CD8-positive, alpha-beta T cell (primary cell): ENCODE measurements at regions of chr19 and their contacts with region 1.

Region 1: DNA sequence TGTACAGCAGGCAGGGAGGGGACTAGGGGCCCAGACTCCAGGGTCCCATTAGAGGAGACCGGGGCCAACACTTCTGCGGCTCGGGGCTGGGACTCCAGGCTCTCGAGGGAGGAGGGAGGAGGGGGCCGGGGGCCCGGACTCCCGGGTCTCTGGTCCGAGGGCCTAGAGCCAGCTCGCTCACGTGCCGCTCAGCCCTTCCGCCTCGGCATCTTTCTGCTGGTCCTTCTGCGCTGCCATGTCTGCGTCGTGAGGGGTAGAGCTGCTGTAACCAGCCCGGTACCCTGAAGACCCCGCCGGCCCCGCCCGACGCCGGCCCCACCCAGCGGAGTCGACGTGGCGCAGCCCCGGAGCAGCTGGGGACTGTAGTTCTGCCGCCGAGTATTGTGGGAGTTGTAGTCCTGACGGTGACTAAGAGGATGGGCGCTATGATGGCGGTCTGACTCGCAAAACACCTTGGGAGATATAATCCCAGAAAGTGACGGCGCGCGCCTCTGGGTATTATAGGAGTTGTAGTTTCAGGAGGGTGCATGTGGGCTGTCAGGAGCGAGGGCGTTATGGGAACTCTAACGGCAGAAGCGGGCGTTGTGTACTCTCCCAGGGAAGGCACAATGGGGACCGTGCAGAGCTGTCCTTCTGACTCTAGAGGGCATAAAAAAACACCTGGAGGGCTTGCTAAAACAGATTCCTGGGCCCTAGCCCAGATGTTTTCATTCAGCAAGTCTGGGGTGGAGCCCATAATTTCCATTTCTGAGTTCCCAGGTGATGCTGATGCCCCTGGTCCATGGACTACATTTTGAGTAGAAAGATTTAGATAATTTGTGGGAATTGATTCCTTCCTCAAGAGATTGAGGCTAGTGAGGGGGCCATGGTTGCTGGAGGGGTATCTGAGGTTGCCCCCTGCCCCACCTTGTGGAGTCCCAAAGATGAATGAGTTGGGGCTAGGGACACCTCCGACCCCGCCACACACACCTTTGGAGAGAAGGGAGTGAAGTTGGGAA is at the start of gene RABAC1:
- DNase-seq: peak; percentile 73 to 93 (median 90)
- ATAC-seq: peak; percentile 87
- H3K4me3 ChIP-seq: peak within 1 kb of the TSS; percentile 80 to 91
- H3K4me3 Mint-ChIP-seq: peak within 1 kb of the TSS; percentile 97
- H3K27ac ChIP-seq: peak within 1 kb of the TSS; percentile 55 to 82
- H3K27ac Mint-ChIP-seq: peak within 1 kb of the TSS; percentile 96
- H3K4me1 ChIP-seq: peaks cover 16% of the 10 kb centered on the region
- H3K4me1 Mint-ChIP-seq: peaks cover 23% of the 10 kb centered on the region
- H3K27me3 ChIP-seq: no peaks in the 10 kb centered on the region
- H3K27me3 Mint-ChIP-seq: no peaks in the 10 kb centered on the region
- CTCF ChIP-seq: peak; percentile 26
- total RNA-seq, gene RABAC1: 99.5 to 114 TPM

Region 2: GRCh38 chr19:41993612-41994483 is 34.5 kb after region 1 on chr19 and contains the start of gene ATP1A3:
- CTCF ChIA-PET with region 1: no interaction called
- POLR2A ChIA-PET with region 1: interaction called, 3 read pairs
- intact Hi-C with region 1: loop called (anchors 1 kb)
- DNase-seq: peak; percentile 32 to 82 (median 64)
- ATAC-seq: peak; percentile 72
- H3K4me3 ChIP-seq: peak within 1 kb of the TSS; percentile 62 to 87
- H3K4me3 Mint-ChIP-seq: peak within 1 kb of the TSS; percentile 92
- H3K27ac ChIP-seq: no peak within 1 kb of the TSS
- H3K27ac Mint-ChIP-seq: peak within 1 kb of the TSS; percentile 60
- H3K4me1 ChIP-seq: peaks cover 18% of the 10 kb centered on the region
- H3K4me1 Mint-ChIP-seq: peaks cover 38% of the 10 kb centered on the region
- H3K27me3 ChIP-seq: peaks cover 23 to 28% of the 10 kb centered on the region in 2 experiments
- H3K27me3 Mint-ChIP-seq: peaks cover 32% of the 10 kb centered on the region
- CTCF ChIP-seq: no peak
- total RNA-seq, gene ATP1A3: 10.2 to 12.3 TPM

Region 3: DNA sequence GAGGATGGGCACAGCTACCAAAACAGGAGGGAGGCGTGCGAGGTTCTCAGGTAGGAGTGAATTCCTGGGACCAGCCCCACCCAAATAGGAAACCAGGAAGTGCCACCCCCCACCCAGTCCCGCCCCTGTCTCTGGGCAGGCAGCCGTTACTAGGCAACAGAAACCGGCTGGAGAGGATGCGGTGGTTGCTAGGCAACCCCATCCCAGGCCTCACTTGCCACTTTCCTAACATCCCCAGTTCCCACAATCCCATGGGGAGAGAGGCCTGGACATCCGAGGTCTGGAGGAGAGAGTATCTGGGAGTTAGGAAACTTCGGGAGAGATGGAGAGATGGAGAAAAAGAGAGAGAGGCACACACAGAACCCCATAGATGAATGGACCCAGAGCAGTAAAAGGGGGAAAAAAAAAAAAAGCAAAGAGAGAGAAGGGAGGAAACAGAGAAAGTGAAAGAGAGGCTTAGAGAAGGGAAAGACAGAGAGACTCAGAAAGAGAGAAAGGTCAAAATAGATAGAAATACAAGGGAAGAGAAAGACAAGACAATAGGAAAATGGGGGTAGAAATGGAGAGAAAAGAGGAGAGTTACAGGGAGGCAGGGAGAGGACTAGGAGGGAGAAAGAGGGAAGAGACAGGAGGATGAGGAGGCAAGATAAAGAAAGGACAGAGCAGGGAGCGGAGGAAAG is 106.9 kb after region 1 on chr19:
- CTCF ChIA-PET with region 1: no interaction called
- POLR2A ChIA-PET with region 1: no interaction called
- intact Hi-C with region 1: no loop called
- DNase-seq: no peak
- ATAC-seq: no peak
- H3K4me3 ChIP-seq: no peak overlapping the region
- H3K4me3 Mint-ChIP-seq: no peak overlapping the region
- H3K27ac ChIP-seq: no peak overlapping the region
- H3K27ac Mint-ChIP-seq: no peak overlapping the region
- H3K4me1 ChIP-seq: no peaks in the 10 kb centered on the region
- H3K4me1 Mint-ChIP-seq: no peaks in the 10 kb centered on the region
- H3K27me3 ChIP-seq: peaks cover 4 to 18% of the 10 kb centered on the region in 2 experiments
- H3K27me3 Mint-ChIP-seq: peaks cover 10% of the 10 kb centered on the region
- CTCF ChIP-seq: no peak